ENCODE measurements at regions of chr11 and their contacts with region 1.

Region 1: DNA sequence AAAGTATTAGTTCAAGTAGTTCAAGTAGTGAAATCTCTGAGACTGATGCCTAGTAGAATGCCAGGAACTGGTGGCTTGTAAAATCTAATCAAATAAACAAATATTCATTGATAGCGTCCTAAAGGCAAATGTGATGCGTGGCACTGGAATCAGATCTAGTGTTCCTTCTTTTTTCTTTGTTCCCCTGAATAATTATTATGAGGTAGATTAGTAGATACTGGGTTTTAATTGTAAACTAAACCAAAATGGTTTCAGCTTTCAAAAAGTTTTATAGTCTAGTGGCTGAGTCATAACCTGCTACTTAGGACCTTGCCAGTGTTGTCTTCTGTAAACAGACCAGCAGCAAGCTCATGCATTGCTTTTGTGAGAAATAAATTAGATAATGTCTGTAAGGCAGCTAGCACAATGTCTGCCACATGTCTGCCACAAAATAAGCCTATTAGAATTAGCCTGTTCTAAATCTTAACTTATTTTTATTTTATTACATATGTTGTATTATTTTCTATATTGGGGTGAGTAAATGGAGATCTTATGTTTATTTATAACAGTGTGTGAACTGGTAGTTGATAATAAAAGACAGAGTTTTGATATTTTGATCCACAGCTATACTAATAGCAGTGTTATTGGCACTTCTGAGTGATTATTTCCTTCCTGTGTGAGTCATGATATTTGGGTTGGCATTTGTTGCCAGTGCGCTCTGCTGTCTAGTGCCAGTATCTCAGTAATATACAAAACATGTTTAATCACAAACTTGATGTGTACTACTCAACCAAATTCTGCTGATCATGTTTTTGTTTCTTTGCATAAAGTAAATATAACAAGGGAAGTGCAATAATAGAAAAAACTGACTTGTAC is 135.7 kb downstream of the TMEM135 start:
- DNase-seq: no peak
- ATAC-seq: no peak

Region 2: DNA sequence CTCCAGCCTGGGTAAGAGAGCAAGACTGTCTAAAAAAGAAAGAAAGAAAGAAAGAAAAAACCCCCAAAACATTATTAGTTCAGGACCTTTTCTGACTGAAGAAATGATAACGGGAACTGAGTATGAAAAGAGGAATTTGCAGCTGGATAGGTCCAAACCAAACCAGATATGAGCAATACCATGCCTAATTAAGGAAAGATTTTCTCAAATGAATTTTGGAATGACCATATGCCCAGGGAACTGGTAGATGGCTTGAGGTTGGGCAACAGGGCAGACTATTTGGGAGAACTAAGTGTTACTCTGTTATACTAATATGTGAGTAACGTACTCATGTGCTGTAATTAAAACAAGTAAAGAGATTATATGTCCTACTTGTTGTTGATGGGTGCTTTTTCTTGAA is 50.4 kb after region 1 on chr11:
- intact Hi-C with region 1: loop called (anchors 10 kb)
- DNase-seq: no peak
- ATAC-seq: no peak

Region 3: GRCh38 chr11:87597725-87598124 is 424.3 kb after region 1 on chr11:
- intact Hi-C with region 1: no loop called
- DNase-seq: no peak
- ATAC-seq: no peak

Measured in Right ventricle myocardium inferior (tissue), 1 donor.